SK-N-SH (cell line): ENCODE measurements at regions of chr6 and their contacts with region 1.

Region 1: DNA sequence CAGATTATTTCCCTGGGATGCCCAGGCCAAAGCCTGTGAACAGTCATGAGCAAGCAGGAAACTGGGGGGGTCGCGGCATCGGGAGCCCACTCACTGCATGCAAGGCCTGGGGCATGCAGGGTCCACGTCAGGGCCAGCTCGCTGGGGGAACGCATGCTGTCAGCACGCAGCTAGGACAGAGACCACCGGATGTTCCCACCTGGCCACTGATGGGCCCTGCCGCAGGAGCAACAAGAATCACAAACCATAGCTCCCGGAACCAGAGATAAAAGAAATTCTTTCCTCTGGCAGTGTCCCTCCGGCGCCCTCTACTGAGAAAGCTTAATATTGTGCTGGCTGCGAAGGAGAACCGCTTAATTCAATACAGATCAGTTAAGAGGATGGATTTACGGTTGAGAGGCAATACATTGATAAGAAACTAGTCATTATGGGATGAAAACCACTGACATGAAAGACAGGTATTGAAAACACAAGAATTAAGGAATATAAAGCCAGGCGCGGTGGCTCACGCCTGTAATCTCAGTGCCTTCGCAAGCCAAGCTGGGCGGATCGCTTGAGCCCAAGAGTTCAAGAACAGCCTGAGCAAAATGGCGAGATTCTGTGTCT is 32.6 kb downstream of the C6orf15 start:
- DNase-seq: peak; percentile 62
- H3K4me3 ChIP-seq: peak overlapping the region in 1 of 2 experiments; percentile 21; a peak in 2 of 4 replicates
- H3K27ac ChIP-seq: no peak overlapping the region
- H3K4me1 ChIP-seq: peaks cover 0 to 3% of the 10 kb centered on the region in 2 experiments; a peak in 1 of 4 replicates
- H3K27me3 ChIP-seq: no peaks in the 10 kb centered on the region
- CTCF ChIP-seq: peak; percentile 89
- EP300 ChIP-seq: no peak
- RAD21 ChIP-seq: peak; percentile 72

Region 2: DNA sequence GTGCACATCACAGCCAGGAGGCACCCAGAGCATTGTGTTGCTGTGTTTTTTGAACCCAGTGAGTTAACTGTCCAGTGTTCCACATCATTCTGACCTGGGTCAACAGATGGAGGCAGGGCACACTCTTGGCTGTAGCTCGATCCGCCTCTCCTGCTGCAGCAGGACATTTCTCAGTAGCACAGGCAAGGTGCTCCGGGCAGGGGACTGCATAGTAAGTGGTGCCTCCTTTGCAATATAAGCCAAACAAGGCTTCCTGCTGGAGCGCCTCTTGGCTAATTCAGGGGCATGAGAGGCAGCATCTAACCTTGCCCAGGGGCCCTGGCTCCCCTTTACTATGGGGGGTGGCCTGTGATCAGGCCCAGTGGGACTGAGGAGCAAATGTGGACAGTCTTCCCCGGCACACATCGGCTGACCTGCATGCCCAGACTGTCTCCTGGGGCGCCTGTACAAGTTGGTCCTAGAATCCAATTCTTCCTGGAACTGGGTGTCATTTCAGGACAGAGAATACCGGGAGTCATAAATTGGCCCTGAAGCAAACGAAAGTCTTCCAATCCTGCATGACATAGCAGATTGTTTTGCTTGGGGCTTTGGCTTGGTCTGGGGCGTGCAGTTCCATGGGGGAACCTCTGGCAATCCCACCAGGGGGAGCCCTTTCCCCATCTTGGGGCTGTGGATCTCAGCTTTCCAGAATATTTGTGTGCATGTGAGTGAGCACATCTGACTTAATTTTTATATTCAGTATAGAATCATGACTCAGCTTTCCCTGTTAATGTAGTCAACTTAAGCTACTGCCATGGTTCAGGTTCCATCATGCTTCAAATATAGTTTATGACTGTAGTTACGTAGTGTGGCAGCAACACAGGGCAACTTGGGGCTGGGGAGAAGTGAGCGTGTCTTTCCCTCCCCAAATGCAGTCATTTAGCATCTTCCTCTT is 251.5 kb before region 1 on chr6:
- CTCF ChIA-PET with region 1: interaction called, 29 read pairs
- POLR2A ChIA-PET with region 1: no interaction called
- DNase-seq: peak; percentile 80
- H3K4me3 ChIP-seq: no peak overlapping the region
- H3K27ac ChIP-seq: peak overlapping the region in 1 of 2 experiments; percentile 38; a peak in 1 of 4 replicates
- H3K4me1 ChIP-seq: peaks cover 7 to 12% of the 10 kb centered on the region in 2 experiments; a peak in 3 of 4 replicates
- H3K27me3 ChIP-seq: no peaks in the 10 kb centered on the region
- CTCF ChIP-seq: peak; percentile 97
- EP300 ChIP-seq: no peak
- RAD21 ChIP-seq: peak; percentile 97

Region 3: GRCh38 chr6:30836431-30836866 is 243.3 kb before region 1 on chr6:
- CTCF ChIA-PET with region 1: interaction called, 10 read pairs
- POLR2A ChIA-PET with region 1: no interaction called
- DNase-seq: no peak
- H3K4me3 ChIP-seq: no peak overlapping the region
- H3K27ac ChIP-seq: no peak overlapping the region
- H3K4me1 ChIP-seq: no peaks in the 10 kb centered on the region; a peak in 1 of 4 replicates
- H3K27me3 ChIP-seq: no peaks in the 10 kb centered on the region
- CTCF ChIP-seq: no peak
- EP300 ChIP-seq: no peak
- RAD21 ChIP-seq: no peak

Region 4: DNA sequence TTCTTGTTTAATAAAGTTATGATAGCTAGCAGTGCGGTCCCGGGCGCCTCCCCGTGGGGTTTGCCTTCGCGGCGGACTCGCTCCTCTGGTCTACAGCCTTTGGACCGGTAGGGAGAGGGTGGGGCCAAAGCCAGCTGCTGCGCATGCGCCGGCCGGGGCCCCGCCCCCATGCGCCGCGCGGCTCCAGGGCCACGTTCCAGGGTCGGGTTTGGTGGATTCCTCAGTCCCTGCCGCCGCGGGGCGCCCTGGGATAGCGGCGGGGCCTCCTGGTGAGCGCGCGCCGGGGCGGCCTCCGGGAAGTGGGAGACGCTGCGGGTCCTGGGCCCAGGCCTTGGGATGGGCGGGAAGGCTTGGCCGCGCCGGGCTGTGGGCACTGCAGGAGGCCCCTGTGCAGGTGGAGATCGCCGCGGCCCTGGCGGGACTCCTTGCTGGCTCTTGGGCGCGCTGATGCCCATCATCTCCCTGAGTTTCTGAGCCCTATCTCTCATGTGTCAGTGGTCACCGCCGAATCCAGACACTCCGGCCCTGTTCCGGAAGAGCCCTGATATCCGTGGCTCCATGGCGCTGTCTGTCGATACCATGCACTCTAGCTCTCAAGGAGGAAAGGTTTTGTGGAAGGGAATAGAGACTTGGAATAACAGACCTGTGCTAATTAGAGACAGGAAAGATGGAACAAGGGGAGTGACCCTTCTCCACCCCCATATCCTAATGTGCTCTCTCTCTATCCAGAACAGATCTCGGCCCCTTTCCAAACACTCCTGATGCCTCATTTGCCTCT is 165.5 kb before region 1 on chr6 and contains the start of gene VARS2:
- CTCF ChIA-PET with region 1: interaction called, 86 read pairs
- POLR2A ChIA-PET with region 1: interaction called, 4 read pairs
- DNase-seq: peak; percentile 99
- H3K4me3 ChIP-seq: peak within 1 kb of the TSS; percentile 56 to 66
- H3K27ac ChIP-seq: peak within 1 kb of the TSS; percentile 79 to 87
- H3K4me1 ChIP-seq: peaks cover 9 to 18% of the 10 kb centered on the region in 2 experiments; a peak in 3 of 4 replicates
- H3K27me3 ChIP-seq: no peaks in the 10 kb centered on the region
- CTCF ChIP-seq: peak; percentile 36; the same call in 1 of the 2 replicates
- EP300 ChIP-seq: no peak
- RAD21 ChIP-seq: peak; percentile 38
- polyA plus RNA-seq, gene VARS2: 31.2 TPM in 2 replicates

Region 5: DNA sequence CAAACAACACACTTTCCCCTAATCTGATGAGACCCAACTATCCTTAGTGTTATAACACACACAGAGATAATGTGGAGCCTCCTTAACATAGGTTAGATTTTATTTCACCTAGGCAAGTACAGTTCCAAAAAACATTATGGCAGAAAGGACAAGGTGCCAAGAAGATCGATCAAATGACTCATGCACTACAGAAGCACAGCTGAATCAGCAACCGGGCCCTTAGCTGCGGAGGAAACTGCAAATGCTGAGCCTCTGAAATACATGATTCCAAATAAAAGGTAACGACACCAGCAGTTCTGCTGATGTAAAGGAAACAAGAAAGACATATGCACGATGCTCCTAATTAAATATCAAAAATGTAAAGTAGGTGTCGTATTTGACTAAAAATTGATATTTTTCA is 116.1 kb before region 1 on chr6:
- CTCF ChIA-PET with region 1: no interaction called
- POLR2A ChIA-PET with region 1: no interaction called
- DNase-seq: no peak
- H3K4me3 ChIP-seq: no peak overlapping the region
- H3K27ac ChIP-seq: no peak overlapping the region
- H3K4me1 ChIP-seq: no peaks in the 10 kb centered on the region; a peak in 1 of 4 replicates
- H3K27me3 ChIP-seq: no peaks in the 10 kb centered on the region
- CTCF ChIP-seq: no peak
- EP300 ChIP-seq: no peak
- RAD21 ChIP-seq: no peak

Region 6: GRCh38 chr6:31058128-31058894 is 21.4 kb before region 1 on chr6:
- CTCF ChIA-PET with region 1: interaction called, 19 read pairs
- POLR2A ChIA-PET with region 1: no interaction called
- DNase-seq: peak; percentile 42
- H3K4me3 ChIP-seq: no peak overlapping the region
- H3K27ac ChIP-seq: peak overlapping the region; percentile 56 to 68; a peak in 3 of 4 replicates
- H3K4me1 ChIP-seq: peaks cover 0 to 15% of the 10 kb centered on the region in 2 experiments; a peak in 2 of 4 replicates
- H3K27me3 ChIP-seq: no peaks in the 10 kb centered on the region
- CTCF ChIP-seq: peak; percentile 53
- EP300 ChIP-seq: peak in 1 of 2 experiments; percentile 81; a peak in 2 of 4 replicates
- RAD21 ChIP-seq: peak; percentile 44

Region 7: DNA sequence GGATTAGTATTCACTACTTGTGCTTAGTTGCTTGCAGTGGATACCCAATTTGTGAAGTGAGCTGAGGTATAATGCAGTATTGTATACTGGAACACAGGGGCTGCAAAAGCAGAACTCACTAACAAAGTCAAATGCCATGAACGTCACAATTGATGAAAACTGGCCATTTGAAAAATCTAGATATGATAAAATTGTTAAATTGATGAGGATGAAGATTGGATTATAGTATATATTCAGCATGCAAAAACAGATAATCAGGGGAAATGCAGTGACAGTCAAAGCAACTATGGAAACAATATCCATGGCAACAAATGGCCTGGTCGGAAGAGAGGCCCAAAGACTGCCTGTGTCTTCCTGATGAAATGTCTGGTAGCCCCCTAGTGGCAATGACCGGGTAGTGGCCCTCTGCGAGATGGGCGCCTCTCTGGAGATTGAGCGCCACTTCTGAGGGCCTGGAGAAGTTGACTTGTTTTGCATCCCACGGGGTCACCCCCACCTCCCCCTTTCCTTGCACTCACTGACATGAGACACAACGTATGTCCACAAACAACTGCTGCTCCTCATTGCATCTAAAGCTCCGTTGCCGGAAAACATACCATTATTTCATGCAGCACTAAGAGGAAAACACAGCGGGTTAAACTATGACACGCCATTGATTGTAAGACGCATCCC is 11.0 kb before region 1 on chr6:
- CTCF ChIA-PET with region 1: interaction called, 43 read pairs
- POLR2A ChIA-PET with region 1: no interaction called
- DNase-seq: peak; percentile 86
- H3K4me3 ChIP-seq: no peak overlapping the region; a peak in 1 of 4 replicates
- H3K27ac ChIP-seq: no peak overlapping the region
- H3K4me1 ChIP-seq: peaks cover 6 to 13% of the 10 kb centered on the region in 2 experiments; a peak in 3 of 4 replicates
- H3K27me3 ChIP-seq: no peaks in the 10 kb centered on the region
- CTCF ChIP-seq: peak; percentile 90
- EP300 ChIP-seq: no peak
- RAD21 ChIP-seq: peak; percentile 65

Region 8: GRCh38 chr6:31094389-31094881 is 14.7 kb after region 1 on chr6:
- CTCF ChIA-PET with region 1: interaction called, 33 read pairs
- POLR2A ChIA-PET with region 1: interaction called, 3 read pairs
- DNase-seq: no peak
- H3K4me3 ChIP-seq: no peak overlapping the region
- H3K27ac ChIP-seq: no peak overlapping the region
- H3K4me1 ChIP-seq: peaks cover 8 to 13% of the 10 kb centered on the region in 2 experiments; a peak in 2 of 4 replicates
- H3K27me3 ChIP-seq: no peaks in the 10 kb centered on the region
- CTCF ChIP-seq: no peak
- EP300 ChIP-seq: no peak
- RAD21 ChIP-seq: no peak